ENCODE measurements at regions of chr14 and their contacts with region 1.

Region 1: DNA sequence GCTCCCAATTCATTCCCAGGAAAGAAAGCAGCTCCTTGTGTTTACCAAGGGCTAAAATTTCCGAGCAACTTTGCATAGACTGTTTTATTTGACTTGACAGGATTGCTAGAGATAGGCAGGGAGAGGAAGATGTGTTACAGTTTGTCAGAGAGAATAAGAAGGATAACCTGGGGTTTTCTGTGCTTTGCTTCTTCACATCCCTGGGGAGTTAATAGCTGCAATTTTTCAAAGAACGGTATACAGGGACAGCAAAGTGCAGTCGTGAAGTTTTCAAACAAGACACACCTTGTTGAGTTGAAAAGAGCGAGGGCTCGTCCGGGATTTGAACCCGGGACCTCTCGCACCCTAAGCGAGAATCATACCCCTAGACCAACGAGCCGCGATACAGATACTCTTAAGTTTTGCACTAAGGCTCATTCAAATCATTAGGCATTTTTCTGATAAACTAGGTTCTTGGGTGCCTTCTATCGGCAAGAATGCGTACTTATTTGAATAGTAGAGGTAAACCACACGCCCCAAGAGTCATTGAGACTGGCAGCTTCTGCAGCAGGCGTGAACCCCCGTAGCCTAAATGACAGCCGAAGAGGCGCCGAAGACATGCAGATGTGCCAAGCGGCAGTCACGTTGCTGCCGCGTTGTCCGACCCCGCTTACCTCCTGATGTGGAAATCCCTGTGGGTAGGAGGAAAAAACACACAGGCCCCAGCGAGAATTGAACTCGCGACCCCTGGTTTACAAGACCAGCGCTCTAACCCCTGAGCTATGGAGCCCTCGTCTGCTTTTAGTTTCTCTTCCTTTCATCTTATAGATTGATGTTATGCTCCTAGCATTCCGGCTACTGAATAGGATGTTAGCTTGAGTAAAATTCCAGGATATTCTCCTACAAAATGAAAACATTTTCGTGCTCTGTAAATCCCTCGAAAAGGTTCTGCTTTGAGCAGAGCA is 22.2 kb upstream of the RNASE12 start:
- DNase-seq: peak; percentile 91 to 93
- H3K4me3 ChIP-seq: peak overlapping the region; percentile 60 to 98 (median 95)
- H3K27ac ChIP-seq: no peak overlapping the region
- H3K4me1 ChIP-seq: peaks cover 0 to 2% (median 0%) of the 10 kb centered on the region in 4 experiments; a peak in 2 of 7 replicates
- H3K27me3 ChIP-seq: no peaks in the 10 kb centered on the region
- CTCF ChIP-seq: peak; percentile 13 to 78 (median 42); a peak in 3 of 4 replicates
- EP300 ChIP-seq: no peak
- POLR2A ChIP-seq: no peak
- RAD21 ChIP-seq: no peak; a peak in 1 of 4 replicates

Region 2: GRCh38 chr14:20413045-20413799 is 200.1 kb before region 1 on chr14 and contains the start of gene TEP1:
- CTCF ChIA-PET with region 1: interaction called, 35 read pairs
- POLR2A ChIA-PET with region 1: interaction called, 3 read pairs
- DNase-seq: peak; percentile 31 to 83
- H3K4me3 ChIP-seq: peak within 1 kb of the TSS; percentile 91 to 97 (median 92)
- H3K27ac ChIP-seq: no peak within 1 kb of the TSS; the same call in 1 of the 2 replicates
- H3K4me1 ChIP-seq: peaks cover 0 to 5% (median 3%) of the 10 kb centered on the region in 4 experiments; a peak in 3 of 7 replicates
- H3K27me3 ChIP-seq: no peaks in the 10 kb centered on the region
- CTCF ChIP-seq: no peak
- EP300 ChIP-seq: no peak
- POLR2A ChIP-seq: peak in 1 of 2 experiments; percentile 57; a peak in 1 of 3 replicates
- RAD21 ChIP-seq: no peak
- total RNA-seq, gene TEP1: 9.6 and 10.7 TPM in 2 replicates

Region 3: DNA sequence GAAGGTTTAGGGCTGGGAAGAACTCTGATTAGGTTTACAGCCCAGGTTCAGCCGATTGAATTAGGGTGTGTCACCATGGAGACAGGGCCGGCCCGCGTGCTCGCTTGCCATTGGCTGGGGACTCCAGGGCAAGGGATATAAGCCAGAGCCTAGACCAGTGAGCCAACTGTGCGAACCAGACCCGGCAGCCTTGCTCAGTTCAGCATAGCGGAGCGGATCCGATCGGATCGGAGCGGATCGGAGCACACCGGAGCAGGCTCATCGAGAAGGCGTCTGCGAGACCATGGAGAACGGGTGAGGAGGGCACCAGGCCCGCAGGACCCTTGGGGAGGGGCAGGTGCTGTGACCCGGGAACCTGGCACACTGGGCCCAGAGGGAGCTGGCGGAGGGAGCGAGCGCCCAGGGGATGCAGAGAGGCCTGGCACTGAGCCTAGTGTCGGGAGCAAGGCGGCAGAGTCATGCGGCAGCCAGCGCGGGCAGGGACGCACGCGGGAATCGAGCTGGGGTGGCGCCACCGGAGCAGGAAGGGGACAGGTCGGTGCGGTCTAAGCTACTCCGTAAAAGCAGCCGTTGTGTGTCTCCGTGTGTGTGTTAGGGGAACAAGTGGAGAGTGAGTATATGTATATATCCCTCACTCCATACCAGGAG is 144.0 kb before region 1 on chr14 and contains the start of gene PNP:
- CTCF ChIA-PET with region 1: interaction called, 19 read pairs
- POLR2A ChIA-PET with region 1: interaction called, 49 read pairs
- DNase-seq: peak; percentile 78 to 96
- H3K4me3 ChIP-seq: peak within 1 kb of the TSS; percentile 85 to 97 (median 90)
- H3K27ac ChIP-seq: peak within 1 kb of the TSS; percentile 63
- H3K4me1 ChIP-seq: peaks cover 0 to 5% (median 2%) of the 10 kb centered on the region in 4 experiments; a peak in 3 of 7 replicates
- H3K27me3 ChIP-seq: no peaks in the 10 kb centered on the region; a peak in 1 of 7 replicates
- CTCF ChIP-seq: no peak
- EP300 ChIP-seq: no peak
- POLR2A ChIP-seq: peak; percentile 99 to 100
- RAD21 ChIP-seq: no peak; a peak in 1 of 4 replicates
- total RNA-seq, gene PNP: 108 and 110 TPM in 2 replicates

Region 4: DNA sequence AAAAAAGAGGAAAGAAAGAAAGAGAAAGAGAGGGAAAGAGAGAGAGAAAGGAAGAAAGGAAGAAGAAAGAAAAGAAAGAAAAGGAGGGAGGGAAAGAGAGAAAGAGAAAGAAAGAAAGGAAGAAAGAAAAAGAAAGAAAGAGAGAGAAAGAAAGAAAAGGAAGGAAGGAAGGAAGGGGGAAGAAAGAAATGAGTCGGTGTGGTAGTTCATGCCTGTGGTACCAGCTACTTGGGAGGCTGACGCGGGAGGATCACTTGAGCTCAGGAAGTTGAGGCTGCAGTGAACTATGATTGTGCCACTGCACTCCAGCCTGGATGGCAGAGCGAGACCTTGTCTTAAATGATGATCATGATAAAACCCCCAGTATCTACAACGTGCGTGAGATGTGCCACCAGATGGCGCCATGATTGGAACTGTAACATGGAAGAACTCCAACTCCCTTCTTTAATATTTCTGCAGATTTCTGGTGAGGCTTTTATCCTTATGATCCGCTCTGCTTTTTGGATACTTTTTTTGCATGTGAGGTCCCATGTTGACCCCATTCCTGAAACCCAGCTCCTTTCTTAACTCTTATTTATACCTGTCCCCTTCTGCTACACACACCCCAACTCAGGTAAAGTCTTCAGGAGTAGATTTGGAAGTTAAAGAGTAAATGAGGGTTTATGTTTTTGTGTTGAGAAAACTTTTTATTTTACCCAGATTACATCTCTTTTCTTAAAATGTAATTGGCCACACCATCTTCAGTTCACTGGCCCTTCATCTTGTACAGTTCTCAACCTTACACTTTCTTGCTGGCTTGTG is 82.4 kb before region 1 on chr14:
- CTCF ChIA-PET with region 1: interaction called, 107 read pairs
- POLR2A ChIA-PET with region 1: no interaction called
- DNase-seq: peak; percentile 41 to 83
- H3K4me3 ChIP-seq: no peak overlapping the region
- H3K27ac ChIP-seq: no peak overlapping the region
- H3K4me1 ChIP-seq: no peaks in the 10 kb centered on the region
- H3K27me3 ChIP-seq: no peaks in the 10 kb centered on the region
- CTCF ChIP-seq: peak; percentile 20 to 78 (median 68)
- EP300 ChIP-seq: no peak
- POLR2A ChIP-seq: no peak
- RAD21 ChIP-seq: peak; percentile 60 to 71

Region 5: DNA sequence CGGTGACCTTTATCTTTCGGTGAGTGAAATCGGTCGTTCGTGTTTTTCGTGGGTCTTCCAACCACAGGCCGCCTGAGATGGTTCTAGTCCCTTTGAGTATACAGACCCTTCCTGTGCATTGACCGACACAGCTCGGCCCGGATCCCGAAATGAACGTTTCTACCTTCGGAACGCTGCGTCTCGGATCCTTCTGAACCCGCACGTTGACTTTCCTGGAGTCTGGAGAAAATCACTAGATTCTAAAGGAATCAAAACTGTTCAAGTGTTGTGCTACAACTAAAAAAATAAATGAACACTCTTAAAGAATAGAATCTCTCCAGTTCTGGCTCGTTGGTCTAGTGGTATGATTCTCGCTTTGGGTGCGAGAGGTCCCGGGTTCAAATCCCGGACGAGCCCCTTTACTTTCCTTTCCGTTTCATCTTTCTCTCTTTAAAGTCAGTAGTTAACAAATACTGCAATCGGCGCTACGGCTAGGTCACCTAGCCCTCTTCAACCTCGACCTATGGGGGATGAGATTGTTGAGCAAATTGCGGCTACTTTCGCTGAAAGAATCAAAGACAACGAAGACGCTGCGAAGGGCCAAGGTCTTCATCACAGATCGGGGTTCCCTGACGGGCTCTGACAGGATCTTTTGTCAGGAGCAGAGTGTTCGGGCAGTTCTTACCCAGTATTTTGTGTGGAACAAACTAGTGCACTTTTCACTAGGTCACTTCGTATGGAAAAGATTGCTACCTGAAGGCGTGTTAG is 19.5 kb after region 1 on chr14:
- CTCF ChIA-PET with region 1: interaction called, 16 read pairs
- POLR2A ChIA-PET with region 1: no interaction called
- DNase-seq: peak; percentile 82 to 87
- H3K4me3 ChIP-seq: peak overlapping the region; percentile 76 to 96 (median 88)
- H3K27ac ChIP-seq: no peak overlapping the region
- H3K4me1 ChIP-seq: peaks cover 0 to 6% (median 0%) of the 10 kb centered on the region in 4 experiments; a peak in 2 of 7 replicates
- H3K27me3 ChIP-seq: peaks cover 0 to 12% (median 3%) of the 10 kb centered on the region in 4 experiments; a peak in 3 of 7 replicates
- CTCF ChIP-seq: no peak
- EP300 ChIP-seq: no peak
- POLR2A ChIP-seq: no peak
- RAD21 ChIP-seq: no peak

Measured in H1 (cell line).